Activated naive CD4-positive, alpha-beta T cell treated with anti-CD3 and anti-CD28 coated beads for 36 hours (primary cell): ENCODE measurements at regions of chr16 and their contacts with region 1.

Region 1: DNA sequence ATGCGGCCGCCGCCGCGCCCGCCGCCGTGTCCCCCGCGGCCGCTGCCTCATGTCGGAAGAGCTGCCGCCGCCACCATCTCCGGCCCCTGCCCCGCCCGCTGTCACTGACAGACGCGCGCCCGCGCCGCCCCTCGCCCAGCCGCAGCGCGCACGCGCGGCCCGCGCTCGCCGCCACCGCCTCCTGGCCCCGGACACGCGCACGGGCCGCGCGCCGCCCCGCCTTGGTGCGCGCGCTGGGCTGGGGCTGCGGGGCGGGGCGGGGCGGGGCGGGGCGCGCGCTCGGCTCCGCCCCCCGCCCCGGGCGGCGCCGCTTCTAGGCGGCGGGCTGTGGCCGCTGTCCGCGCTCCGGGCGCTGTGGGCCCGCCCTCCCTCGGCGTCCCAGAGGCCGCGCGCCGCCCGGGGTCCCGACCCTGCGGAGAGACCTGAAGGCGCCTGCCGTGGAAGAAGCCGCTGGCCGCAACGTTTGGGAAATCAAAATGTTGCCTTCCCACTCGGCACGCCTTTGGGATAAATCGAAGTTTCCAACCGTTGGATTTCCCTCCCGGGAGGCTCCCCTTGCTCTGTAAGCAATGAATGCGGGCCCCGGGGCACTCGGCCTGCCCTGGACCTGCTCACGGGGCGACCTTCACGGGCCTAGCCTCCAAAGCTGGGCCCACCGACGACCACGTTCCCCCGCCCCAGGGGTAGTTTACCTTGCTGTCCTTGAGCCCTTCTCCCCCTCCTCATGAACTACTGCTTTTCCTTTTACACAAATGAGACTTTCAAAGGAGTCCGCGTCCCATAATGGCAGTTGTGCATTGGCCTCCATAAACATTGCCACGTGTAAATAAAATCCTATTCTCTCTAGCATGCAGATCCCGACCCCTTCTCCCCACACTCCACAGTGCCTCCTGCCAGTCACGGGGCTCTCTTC is at the start of gene ADCY9:
- DNase-seq: peak; percentile 71
- H3K4me3 Mint-ChIP-seq: peak within 1 kb of the TSS; percentile 86
- H3K27ac Mint-ChIP-seq: peak within 1 kb of the TSS; percentile 63
- H3K4me1 Mint-ChIP-seq: peaks cover 39% of the 10 kb centered on the region
- H3K27me3 Mint-ChIP-seq: peaks cover 2% of the 10 kb centered on the region
- total RNA-seq, gene ADCY9: 6.5 to 7.1 TPM

Region 2: GRCh38 chr16:3637371-3637923 is 479.1 kb before region 1 on chr16:
- CTCF ChIA-PET with region 1: no interaction called
- intact Hi-C with region 1: no loop called
- DNase-seq: peak; percentile 64
- H3K4me3 Mint-ChIP-seq: peak overlapping the region; percentile 16
- H3K27ac Mint-ChIP-seq: peak overlapping the region; percentile 84
- H3K4me1 Mint-ChIP-seq: peaks cover 25% of the 10 kb centered on the region
- H3K27me3 Mint-ChIP-seq: no peaks in the 10 kb centered on the region

Region 3: DNA sequence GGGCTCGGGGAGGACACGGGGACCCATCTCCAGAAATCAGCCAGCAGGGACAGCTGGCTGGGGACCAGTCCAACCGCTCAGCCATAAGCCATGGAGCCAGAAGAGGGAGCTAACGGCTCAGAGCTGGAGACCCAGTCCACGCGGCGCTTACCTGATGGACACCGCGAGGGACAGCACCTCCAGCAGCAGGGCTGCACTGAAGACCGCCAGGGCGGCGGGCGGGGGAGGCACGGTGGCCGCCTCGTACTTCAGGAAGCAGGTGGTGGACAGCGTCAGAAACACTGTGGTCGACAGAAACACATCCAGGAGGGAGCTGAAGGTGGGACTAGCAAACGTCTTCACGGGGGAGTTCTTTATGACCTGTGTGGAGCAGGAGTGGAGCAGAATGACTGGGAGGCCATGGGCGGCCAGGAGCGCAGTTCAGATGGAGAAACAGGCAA is 133.5 kb before region 1 on chr16:
- CTCF ChIA-PET with region 1: interaction called, 3 read pairs
- intact Hi-C with region 1: loop called (anchors 10 kb)
- DNase-seq: peak; percentile 73
- H3K4me3 Mint-ChIP-seq: no peak overlapping the region
- H3K27ac Mint-ChIP-seq: no peak overlapping the region
- H3K4me1 Mint-ChIP-seq: peaks cover 4% of the 10 kb centered on the region
- H3K27me3 Mint-ChIP-seq: no peaks in the 10 kb centered on the region

Region 4: DNA sequence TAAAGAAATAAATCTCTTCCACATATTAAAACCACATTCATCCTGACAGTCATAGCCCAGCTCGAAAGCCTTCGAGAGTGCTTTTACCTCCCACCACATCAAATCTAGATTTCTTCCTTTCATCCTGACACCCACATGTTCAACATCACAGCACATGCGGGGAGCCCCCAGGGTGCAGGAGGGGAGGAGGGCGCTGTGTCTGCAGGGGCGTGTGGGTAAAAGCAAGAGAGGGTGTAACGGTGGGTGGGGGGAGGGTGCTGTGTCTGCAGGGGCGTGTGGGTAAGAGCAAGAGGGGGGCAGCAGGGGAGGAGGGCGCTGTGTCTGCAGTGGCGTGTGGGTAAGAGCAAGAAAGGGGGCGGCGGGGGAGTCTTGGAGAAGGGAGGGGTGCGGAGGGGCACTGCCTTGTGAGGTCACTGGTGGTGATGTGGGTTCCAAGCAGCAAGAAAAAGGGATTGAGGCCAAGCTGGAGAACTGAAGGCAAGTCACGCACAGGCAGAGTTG is 35.0 kb before region 1 on chr16:
- CTCF ChIA-PET with region 1: no interaction called
- intact Hi-C with region 1: loop called (anchors 2 kb)
- DNase-seq: peak; percentile 84
- H3K4me3 Mint-ChIP-seq: peak overlapping the region; percentile 35
- H3K27ac Mint-ChIP-seq: peak overlapping the region; percentile 48
- H3K4me1 Mint-ChIP-seq: peaks cover 51% of the 10 kb centered on the region
- H3K27me3 Mint-ChIP-seq: no peaks in the 10 kb centered on the region

Region 5: GRCh38 chr16:4140652-4141051 is 24.1 kb after region 1 on chr16:
- CTCF ChIA-PET with region 1: no interaction called
- intact Hi-C with region 1: no loop called
- DNase-seq: peak; percentile 18
- H3K4me3 Mint-ChIP-seq: no peak overlapping the region
- H3K27ac Mint-ChIP-seq: peak overlapping the region; percentile 59
- H3K4me1 Mint-ChIP-seq: peaks cover 8% of the 10 kb centered on the region
- H3K27me3 Mint-ChIP-seq: peaks cover 4% of the 10 kb centered on the region

Region 6: GRCh38 chr16:4183237-4184036 is 66.8 kb after region 1 on chr16:
- CTCF ChIA-PET with region 1: no interaction called
- intact Hi-C with region 1: loop called (anchors 5 kb)
- DNase-seq: peak; percentile 90
- H3K4me3 Mint-ChIP-seq: peak overlapping the region; percentile 78
- H3K27ac Mint-ChIP-seq: peak overlapping the region; percentile 84
- H3K4me1 Mint-ChIP-seq: peaks cover 7% of the 10 kb centered on the region
- H3K27me3 Mint-ChIP-seq: no peaks in the 10 kb centered on the region

Region 7: GRCh38 chr16:4217204-4218131 is 100.9 kb after region 1 on chr16:
- CTCF ChIA-PET with region 1: no interaction called
- intact Hi-C with region 1: no loop called
- DNase-seq: no peak
- H3K4me3 Mint-ChIP-seq: no peak overlapping the region
- H3K27ac Mint-ChIP-seq: no peak overlapping the region
- H3K4me1 Mint-ChIP-seq: no peaks in the 10 kb centered on the region
- H3K27me3 Mint-ChIP-seq: no peaks in the 10 kb centered on the region